CD8-positive, alpha-beta T cell (primary cell): ENCODE measurements at regions of chr10 and their contacts with region 1.

Region 1: GRCh38 chr10:6607778-6608177 is 27.7 kb upstream of the PRKCQ start:
- DNase-seq: no peak
- ATAC-seq: no peak
- H3K4me3 ChIP-seq: no peak overlapping the region
- H3K4me3 Mint-ChIP-seq: no peak overlapping the region
- H3K27ac ChIP-seq: peak overlapping the region in 1 of 2 experiments; percentile 73
- H3K27ac Mint-ChIP-seq: peak overlapping the region; percentile 96
- H3K4me1 ChIP-seq: peaks cover 42% of the 10 kb centered on the region
- H3K4me1 Mint-ChIP-seq: peaks cover 70% of the 10 kb centered on the region
- H3K27me3 ChIP-seq: no peaks in the 10 kb centered on the region
- H3K27me3 Mint-ChIP-seq: no peaks in the 10 kb centered on the region
- CTCF ChIP-seq: no peak

Region 2: GRCh38 chr10:4740471-4740870 is 1867.3 kb before region 1 on chr10:
- CTCF ChIA-PET with region 1: no interaction called
- POLR2A ChIA-PET with region 1: no interaction called
- intact Hi-C with region 1: no loop called
- DNase-seq: no peak
- ATAC-seq: no peak
- H3K4me3 ChIP-seq: no peak overlapping the region
- H3K4me3 Mint-ChIP-seq: no peak overlapping the region
- H3K27ac ChIP-seq: no peak overlapping the region
- H3K27ac Mint-ChIP-seq: no peak overlapping the region
- H3K4me1 ChIP-seq: no peaks in the 10 kb centered on the region
- H3K4me1 Mint-ChIP-seq: no peaks in the 10 kb centered on the region
- H3K27me3 ChIP-seq: no peaks in the 10 kb centered on the region
- H3K27me3 Mint-ChIP-seq: peaks cover 28% of the 10 kb centered on the region
- CTCF ChIP-seq: no peak

Region 3: GRCh38 chr10:6108603-6109443 is 499.0 kb before region 1 on chr10:
- CTCF ChIA-PET with region 1: no interaction called
- POLR2A ChIA-PET with region 1: no interaction called
- intact Hi-C with region 1: loop called in 1 of 2 experiments (anchors 10 kb)
- DNase-seq: peak in 5 of 9 experiments; percentile 15 to 77 (median 44)
- ATAC-seq: peak; percentile 85
- H3K4me3 ChIP-seq: no peak overlapping the region
- H3K4me3 Mint-ChIP-seq: peak overlapping the region; percentile 53
- H3K27ac ChIP-seq: no peak overlapping the region
- H3K27ac Mint-ChIP-seq: peak overlapping the region; percentile 62
- H3K4me1 ChIP-seq: peaks cover 8% of the 10 kb centered on the region
- H3K4me1 Mint-ChIP-seq: peaks cover 29% of the 10 kb centered on the region
- H3K27me3 ChIP-seq: no peaks in the 10 kb centered on the region
- H3K27me3 Mint-ChIP-seq: no peaks in the 10 kb centered on the region
- CTCF ChIP-seq: peak; percentile 86

Region 4: GRCh38 chr10:6445501-6446316 is 162.1 kb before region 1 on chr10:
- CTCF ChIA-PET with region 1: interaction called, 20 read pairs
- POLR2A ChIA-PET with region 1: no interaction called
- intact Hi-C with region 1: loop called in 1 of 2 experiments (anchors 1 kb)
- DNase-seq: peak; percentile 36 to 76 (median 64)
- ATAC-seq: peak; percentile 58
- H3K4me3 ChIP-seq: no peak overlapping the region
- H3K4me3 Mint-ChIP-seq: no peak overlapping the region
- H3K27ac ChIP-seq: peak overlapping the region in 1 of 2 experiments; percentile 47
- H3K27ac Mint-ChIP-seq: peak overlapping the region; percentile 83
- H3K4me1 ChIP-seq: peaks cover 8% of the 10 kb centered on the region
- H3K4me1 Mint-ChIP-seq: peaks cover 22% of the 10 kb centered on the region
- H3K27me3 ChIP-seq: no peaks in the 10 kb centered on the region
- H3K27me3 Mint-ChIP-seq: no peaks in the 10 kb centered on the region
- CTCF ChIP-seq: peak; percentile 73

Region 5: GRCh38 chr10:6498771-6499170 is 109.0 kb before region 1 on chr10:
- CTCF ChIA-PET with region 1: no interaction called
- POLR2A ChIA-PET with region 1: no interaction called
- intact Hi-C with region 1: loop called (anchors 5 kb)
- DNase-seq: peak in 7 of 9 experiments; percentile 42 to 89 (median 52)
- ATAC-seq: peak; percentile 72
- H3K4me3 ChIP-seq: no peak overlapping the region
- H3K4me3 Mint-ChIP-seq: peak overlapping the region; percentile 55
- H3K27ac ChIP-seq: peak overlapping the region; percentile 0 to 87
- H3K27ac Mint-ChIP-seq: peak overlapping the region; percentile 94
- H3K4me1 ChIP-seq: peaks cover 36% of the 10 kb centered on the region
- H3K4me1 Mint-ChIP-seq: peaks cover 31% of the 10 kb centered on the region
- H3K27me3 ChIP-seq: no peaks in the 10 kb centered on the region
- H3K27me3 Mint-ChIP-seq: no peaks in the 10 kb centered on the region
- CTCF ChIP-seq: no peak

Region 6: GRCh38 chr10:6621536-6621935 is 13.8 kb after region 1 on chr10:
- CTCF ChIA-PET with region 1: interaction called, 15 read pairs
- POLR2A ChIA-PET with region 1: interaction called, 4 read pairs
- intact Hi-C with region 1: no loop called
- DNase-seq: no peak
- ATAC-seq: no peak
- H3K4me3 ChIP-seq: no peak overlapping the region
- H3K4me3 Mint-ChIP-seq: no peak overlapping the region
- H3K27ac ChIP-seq: no peak overlapping the region
- H3K27ac Mint-ChIP-seq: no peak overlapping the region
- H3K4me1 ChIP-seq: peaks cover 10% of the 10 kb centered on the region
- H3K4me1 Mint-ChIP-seq: peaks cover 12% of the 10 kb centered on the region
- H3K27me3 ChIP-seq: no peaks in the 10 kb centered on the region
- H3K27me3 Mint-ChIP-seq: no peaks in the 10 kb centered on the region
- CTCF ChIP-seq: no peak

Region 7: GRCh38 chr10:6647811-6648526 is 40.2 kb after region 1 on chr10:
- CTCF ChIA-PET with region 1: interaction called, 6 read pairs
- POLR2A ChIA-PET with region 1: no interaction called
- intact Hi-C with region 1: loop called in 1 of 2 experiments (anchors 5 kb)
- DNase-seq: peak; percentile 43 to 84 (median 74)
- ATAC-seq: peak; percentile 99
- H3K4me3 ChIP-seq: no peak overlapping the region
- H3K4me3 Mint-ChIP-seq: no peak overlapping the region
- H3K27ac ChIP-seq: no peak overlapping the region
- H3K27ac Mint-ChIP-seq: no peak overlapping the region
- H3K4me1 ChIP-seq: peaks cover 15% of the 10 kb centered on the region
- H3K4me1 Mint-ChIP-seq: peaks cover 22% of the 10 kb centered on the region
- H3K27me3 ChIP-seq: no peaks in the 10 kb centered on the region
- H3K27me3 Mint-ChIP-seq: no peaks in the 10 kb centered on the region
- CTCF ChIP-seq: peak; percentile 90

Region 8: DNA sequence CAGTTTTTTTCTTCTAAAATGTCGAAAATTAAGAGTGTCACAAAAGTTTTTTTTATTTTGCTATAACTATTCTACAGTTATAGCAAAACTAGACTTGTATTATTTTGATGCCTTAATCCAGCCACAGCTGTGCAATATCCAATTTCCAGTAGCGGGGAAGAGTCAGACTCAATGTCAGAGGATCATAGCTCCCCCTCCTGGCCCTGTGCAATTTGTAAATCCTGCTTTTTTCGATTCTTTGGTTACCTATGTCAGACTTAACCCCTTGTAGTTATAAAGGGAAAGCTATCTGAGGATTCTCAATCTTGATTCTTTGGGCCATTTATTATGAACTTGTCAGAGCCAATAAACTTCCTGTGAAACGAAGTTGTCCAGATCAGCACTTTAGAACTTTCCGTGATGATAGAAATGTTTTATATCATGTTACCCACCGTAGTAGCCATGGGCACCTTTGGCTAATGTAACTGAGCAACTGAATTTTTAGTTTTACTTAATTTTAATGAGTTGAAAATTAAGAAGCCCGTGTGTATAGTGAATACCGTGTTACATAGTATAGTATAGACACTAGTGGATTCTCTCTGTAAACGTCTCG is 60.0 kb after region 1 on chr10:
- CTCF ChIA-PET with region 1: no interaction called
- POLR2A ChIA-PET with region 1: no interaction called
- intact Hi-C with region 1: loop called in 1 of 2 experiments (anchors 5 kb)
- DNase-seq: peak in 3 of 9 experiments; percentile 36 to 56 (median 40)
- ATAC-seq: no peak
- H3K4me3 ChIP-seq: no peak overlapping the region
- H3K4me3 Mint-ChIP-seq: no peak overlapping the region
- H3K27ac ChIP-seq: no peak overlapping the region
- H3K27ac Mint-ChIP-seq: no peak overlapping the region
- H3K4me1 ChIP-seq: peaks cover 13% of the 10 kb centered on the region
- H3K4me1 Mint-ChIP-seq: peaks cover 18% of the 10 kb centered on the region
- H3K27me3 ChIP-seq: no peaks in the 10 kb centered on the region
- H3K27me3 Mint-ChIP-seq: no peaks in the 10 kb centered on the region
- CTCF ChIP-seq: peak; percentile 44